Thyroid gland (tissue), 4 donors: ENCODE measurements at regions of chr16 and their contacts with region 1.

Region 1: DNA sequence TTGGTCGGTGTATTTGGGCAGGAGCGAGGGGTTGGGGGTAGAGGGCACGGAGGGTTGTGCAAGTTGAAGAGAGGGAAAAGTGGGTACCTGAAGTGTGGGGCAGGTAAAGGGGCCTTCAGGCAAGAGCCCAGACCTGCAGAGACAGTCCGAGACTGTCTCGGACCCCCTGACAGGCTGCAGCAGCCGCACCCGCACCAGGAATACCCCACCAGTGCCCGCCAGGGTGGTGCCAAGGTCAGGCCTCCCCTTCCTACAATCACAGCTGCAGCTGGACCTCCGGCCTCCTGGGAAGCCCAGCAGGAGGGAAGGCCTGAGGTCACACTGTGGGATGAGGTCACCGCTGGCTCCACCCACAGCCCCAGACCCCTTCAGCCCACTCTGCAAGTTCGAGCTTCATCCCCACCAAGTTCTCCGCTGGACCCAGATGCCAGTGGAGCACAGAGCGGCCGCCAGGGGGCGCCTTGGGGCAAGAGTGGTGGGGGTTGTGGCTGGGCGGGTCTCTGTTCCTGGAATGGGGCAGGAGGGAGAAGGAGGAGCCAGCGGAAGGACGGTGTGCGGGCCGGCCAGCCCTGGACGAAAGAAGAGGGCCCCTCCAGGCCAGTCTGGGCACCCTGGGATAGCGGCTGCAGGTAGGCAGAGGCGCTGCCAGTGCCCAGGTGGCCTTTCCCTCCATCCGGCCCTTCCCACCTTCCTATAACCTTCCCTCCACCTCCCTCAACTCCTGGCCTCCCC is at the start of gene HSD3B7:
- DNase-seq: peak; percentile 83 to 89
- H3K4me3 ChIP-seq: peak within 1 kb of the TSS in 2 of 3 donors; percentile 6 to 27
- H3K27ac ChIP-seq: peak within 1 kb of the TSS in 1 of 3 donors; percentile 31
- H3K4me1 ChIP-seq: peaks cover 8 to 12% of the 10 kb centered on the region in 2 donors
- H3K27me3 ChIP-seq: no peaks in the 10 kb centered on the region
- CTCF ChIP-seq: peak; percentile 86 to 95 (median 92)
- POLR2A ChIP-seq: no peak
- total RNA-seq, gene HSD3B7: 4.0 to 13.8 (median 10.9) TPM

Region 2: DNA sequence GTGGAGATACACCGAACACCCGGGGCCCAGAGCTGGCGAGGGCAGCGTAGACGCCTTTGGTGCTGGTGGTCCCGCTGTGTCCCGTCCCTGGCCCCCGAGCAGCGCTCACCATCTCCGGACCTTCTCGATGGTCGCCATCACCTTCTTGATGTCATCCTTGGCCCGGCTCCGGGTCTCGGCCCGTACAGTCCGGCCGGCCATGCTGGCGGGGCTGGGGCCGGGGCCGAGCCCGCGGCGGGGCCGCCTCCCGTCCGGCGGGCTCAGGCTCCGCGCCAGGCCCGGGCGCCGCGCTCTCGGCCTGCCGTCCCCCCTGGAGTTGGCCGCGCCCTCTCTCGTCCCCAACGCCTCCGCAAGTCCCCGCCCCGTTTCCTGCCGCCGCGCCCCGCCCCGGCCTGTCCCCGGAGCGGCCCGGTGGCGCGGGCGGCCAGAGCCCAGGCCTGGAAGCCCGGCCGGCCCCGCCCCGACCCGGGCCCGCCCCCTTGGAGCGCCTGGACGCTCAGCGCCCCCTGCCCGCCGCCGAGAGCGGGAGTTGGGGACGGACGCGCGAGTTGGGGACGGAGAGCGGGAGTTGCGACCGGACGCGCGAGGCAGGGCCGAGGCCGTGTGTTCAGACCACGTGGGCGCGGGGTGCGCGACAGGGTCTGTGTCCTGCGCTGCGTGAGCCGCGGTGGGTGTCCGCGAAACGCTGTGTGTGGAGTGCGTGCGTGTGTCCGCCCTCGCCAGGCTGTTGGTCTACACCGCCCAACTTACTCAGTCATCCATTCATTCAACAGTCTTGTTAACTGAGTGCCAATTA is 90.9 kb before region 1 on chr16 and contains the start of gene BCL7C:
- intact Hi-C with region 1: no loop called
- DNase-seq: peak; percentile 95
- H3K4me3 ChIP-seq: peak within 1 kb of the TSS; percentile 51 to 70 (median 62)
- H3K27ac ChIP-seq: peak within 1 kb of the TSS; percentile 88 to 90 (median 90)
- H3K4me1 ChIP-seq: peaks cover 17 to 47% of the 10 kb centered on the region in 2 donors
- H3K27me3 ChIP-seq: no peaks in the 10 kb centered on the region
- CTCF ChIP-seq: peak in 3 of 6 experiments; percentile 35 to 69 (median 63)
- POLR2A ChIP-seq: peak; percentile 58 to 72
- total RNA-seq, gene BCL7C: 43.6 to 67.6 (median 47.9) TPM

Region 3: GRCh38 chr16:31142109-31143010 is 157.5 kb after region 1 on chr16:
- intact Hi-C with region 1: loop called (anchors 10 kb)
- DNase-seq: peak; percentile 99
- H3K4me3 ChIP-seq: peak overlapping the region in 1 of 3 donors; percentile 43
- H3K27ac ChIP-seq: peak overlapping the region; percentile 79 to 87 (median 86)
- H3K4me1 ChIP-seq: peaks cover 21 to 36% of the 10 kb centered on the region in 2 donors
- H3K27me3 ChIP-seq: no peaks in the 10 kb centered on the region
- CTCF ChIP-seq: peak; percentile 75 to 99 (median 95)
- POLR2A ChIP-seq: peak in 1 of 2 donors; percentile 53

Region 4: DNA sequence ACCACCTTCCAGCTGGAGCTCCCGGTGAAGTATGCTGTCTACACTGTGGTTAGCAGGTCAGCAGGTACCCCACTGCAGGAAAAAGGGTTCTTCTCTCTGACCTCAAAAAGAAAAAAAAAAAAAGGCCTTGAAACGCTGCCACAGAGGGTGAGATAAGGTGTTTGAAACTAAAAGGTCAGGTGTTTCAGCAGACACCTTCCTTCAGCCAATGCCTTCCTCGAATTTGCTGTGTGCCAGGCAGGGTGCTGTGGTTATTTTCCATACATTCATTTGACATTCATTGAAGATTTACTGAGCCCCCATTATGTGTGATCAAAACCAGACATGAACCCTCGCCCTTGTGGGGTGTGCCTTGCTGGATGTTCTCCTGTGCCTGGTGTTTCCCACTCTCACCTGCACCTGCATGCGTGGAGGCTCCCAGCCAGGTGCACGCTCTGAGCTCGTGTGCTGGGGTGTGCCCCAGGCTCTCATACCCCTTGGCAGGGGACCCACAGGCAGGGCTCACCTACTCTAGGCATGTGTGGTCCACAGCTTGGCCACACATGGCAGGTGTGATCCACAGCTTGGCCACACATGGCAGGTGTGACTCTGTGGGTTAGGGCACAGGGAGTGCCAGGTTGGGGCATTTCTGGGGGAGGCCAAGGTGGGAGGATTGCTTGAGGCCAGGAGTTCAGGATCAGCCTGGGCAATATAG is 392.5 kb after region 1 on chr16:
- intact Hi-C with region 1: loop called (anchors 5 kb)
- DNase-seq: no peak
- H3K4me3 ChIP-seq: no peak overlapping the region
- H3K27ac ChIP-seq: no peak overlapping the region
- H3K4me1 ChIP-seq: no peaks in the 10 kb centered on the region
- H3K27me3 ChIP-seq: no peaks in the 10 kb centered on the region
- CTCF ChIP-seq: no peak
- POLR2A ChIP-seq: no peak

Region 5: DNA sequence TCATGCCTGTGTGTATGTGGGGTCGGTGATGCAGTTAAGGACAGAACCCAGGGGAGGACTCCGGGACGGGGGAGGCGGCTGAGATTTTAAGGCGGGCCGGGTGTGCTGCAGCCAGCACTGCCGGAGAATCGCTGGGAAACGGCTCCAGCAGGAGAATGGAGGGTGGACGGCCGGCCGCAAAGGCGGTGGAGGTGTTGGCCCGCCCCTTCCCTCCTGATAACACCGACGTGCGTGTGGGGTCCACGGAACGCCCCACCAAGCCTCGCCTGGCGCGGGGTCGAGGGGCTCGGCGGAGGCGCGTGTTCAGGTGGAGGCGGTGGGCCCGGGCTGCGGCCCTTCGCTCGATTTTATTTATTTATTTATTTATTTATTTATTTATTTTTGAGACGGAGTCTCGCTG is 457.1 kb after region 1 on chr16:
- intact Hi-C with region 1: loop called (anchors 2 kb)
- DNase-seq: no peak
- H3K4me3 ChIP-seq: peak overlapping the region in 1 of 3 donors; percentile 69
- H3K27ac ChIP-seq: no peak overlapping the region
- H3K4me1 ChIP-seq: peaks cover 0 to 7% of the 10 kb centered on the region in 2 donors
- H3K27me3 ChIP-seq: no peaks in the 10 kb centered on the region
- CTCF ChIP-seq: no peak
- POLR2A ChIP-seq: no peak

Region 6: DNA sequence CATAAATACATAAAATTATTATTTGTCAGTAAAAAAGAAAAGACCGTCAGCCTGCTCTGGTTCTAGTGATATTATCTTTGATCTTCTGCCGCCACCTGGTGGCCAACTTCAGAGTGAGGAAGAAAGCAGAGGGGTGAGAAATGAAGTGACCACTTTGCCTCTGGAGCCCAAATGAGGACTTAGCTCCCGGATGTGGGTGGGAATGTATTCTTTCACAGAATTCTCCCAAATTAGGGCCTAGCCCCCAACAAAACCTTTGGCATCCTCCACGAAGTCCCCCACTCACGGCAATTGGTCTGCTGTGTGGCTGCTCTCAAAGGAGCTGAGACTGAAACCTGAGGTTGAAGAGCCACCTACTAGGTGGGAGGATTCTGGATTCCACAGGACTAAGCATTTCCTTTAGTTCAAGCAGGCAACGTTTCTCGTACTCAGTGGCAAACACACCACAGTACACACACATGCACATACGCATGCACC is 883.9 kb after region 1 on chr16:
- intact Hi-C with region 1: loop called (anchors 10 kb)
- DNase-seq: peak; percentile 80 to 87
- H3K4me3 ChIP-seq: no peak overlapping the region
- H3K27ac ChIP-seq: no peak overlapping the region
- H3K4me1 ChIP-seq: peaks cover 0 to 10% of the 10 kb centered on the region in 2 donors
- H3K27me3 ChIP-seq: no peaks in the 10 kb centered on the region
- CTCF ChIP-seq: peak; percentile 56 to 84 (median 73)
- POLR2A ChIP-seq: no peak